Gastrocnemius medialis (tissue), 4 donors: ENCODE measurements at regions of chr1 and their contacts with region 1.

Region 1: DNA sequence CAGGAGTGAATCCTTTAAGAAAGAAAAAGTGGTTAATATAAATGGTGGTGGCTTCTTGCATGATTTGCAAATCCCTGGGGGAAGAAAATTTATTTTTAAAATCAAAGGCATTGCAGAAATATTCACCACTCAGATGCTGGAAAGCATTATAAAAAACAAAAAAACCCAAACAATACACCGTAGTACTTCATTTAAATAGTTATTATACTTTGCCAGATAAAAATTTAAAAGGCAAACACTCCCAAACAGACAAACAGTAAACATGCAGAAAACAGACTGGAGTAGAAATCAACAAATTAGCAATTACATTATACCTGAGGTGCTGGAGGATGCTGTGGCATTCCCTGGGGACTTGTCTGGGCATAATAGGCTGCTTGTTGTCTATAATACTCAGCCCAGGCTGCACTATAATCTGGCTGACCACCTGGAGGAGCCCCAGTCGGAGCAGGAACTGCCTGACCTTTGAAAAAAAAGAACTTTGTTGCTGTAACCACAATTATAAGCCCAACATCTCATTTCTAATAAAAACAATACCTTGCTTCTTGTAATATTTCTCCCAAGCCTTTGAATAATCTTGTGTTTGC is 29.9 kb downstream of the FUBP1 start:
- DNase-seq: no peak
- ATAC-seq: peak in 1 of 2 donors; percentile 37
- H3K4me3 ChIP-seq: no peak overlapping the region
- H3K27ac ChIP-seq: peak overlapping the region in 2 of 4 donors; percentile 6 to 16
- H3K4me1 ChIP-seq: peaks cover 0 to 5% of the 10 kb centered on the region in 2 donors
- H3K27me3 ChIP-seq: no peaks in the 10 kb centered on the region
- CTCF ChIP-seq: peak in 1 of 5 experiments; percentile 19
- POLR2A ChIP-seq: no peak

Region 2: DNA sequence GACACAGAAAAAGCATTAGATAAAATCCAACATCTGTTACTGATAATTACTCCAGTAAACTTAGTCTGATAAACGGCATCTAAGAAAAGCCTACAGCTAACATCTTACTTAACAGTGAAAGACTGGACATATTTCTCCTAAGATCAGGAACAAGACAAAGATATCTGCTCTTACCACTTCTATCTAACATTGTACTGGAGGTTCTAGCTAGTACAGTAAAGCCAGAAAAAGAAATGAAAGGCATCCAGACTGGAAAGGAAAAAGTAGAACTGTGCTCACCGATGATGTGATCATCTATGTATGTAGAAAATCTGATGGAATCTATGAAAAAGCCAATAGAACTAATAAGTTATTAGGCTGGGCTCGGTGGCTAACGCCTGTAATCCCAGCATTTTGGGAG is 38.8 kb before region 1 on chr1:
- in situ Hi-C with region 1: no loop called
- intact Hi-C with region 1: loop called (anchors 5 kb)
- DNase-seq: no peak
- ATAC-seq: no peak
- H3K4me3 ChIP-seq: no peak overlapping the region
- H3K27ac ChIP-seq: peak overlapping the region in 3 of 4 donors; percentile 49 to 69 (median 67)
- H3K4me1 ChIP-seq: peaks cover 0 to 8% of the 10 kb centered on the region in 2 donors
- H3K27me3 ChIP-seq: no peaks in the 10 kb centered on the region
- CTCF ChIP-seq: no peak
- POLR2A ChIP-seq: no peak